ENCODE measurements at regions of chr5 and their contacts with region 1.

Region 1: GRCh38 chr5:10601246-10602030 is 37.6 kb downstream of the ANKRD33B start:
- DNase-seq: peak; percentile 99
- H3K4me3 Mint-ChIP-seq: peak overlapping the region; percentile 72
- H3K27ac Mint-ChIP-seq: peak overlapping the region; percentile 96
- H3K4me1 Mint-ChIP-seq: peaks cover 33% of the 10 kb centered on the region
- H3K27me3 Mint-ChIP-seq: no peaks in the 10 kb centered on the region
- CTCF ChIP-seq: no peak

Region 2: GRCh38 chr5:10552183-10553143 is 49.0 kb before region 1 on chr5:
- CTCF ChIA-PET with region 1: interaction called, 4 read pairs
- POLR2A ChIA-PET with region 1: interaction called, 10 read pairs
- intact Hi-C with region 1: no loop called
- DNase-seq: peak; percentile 79
- H3K4me3 Mint-ChIP-seq: no peak overlapping the region
- H3K27ac Mint-ChIP-seq: peak overlapping the region; percentile 87
- H3K4me1 Mint-ChIP-seq: peaks cover 65% of the 10 kb centered on the region
- H3K27me3 Mint-ChIP-seq: no peaks in the 10 kb centered on the region
- CTCF ChIP-seq: no peak

Region 3: DNA sequence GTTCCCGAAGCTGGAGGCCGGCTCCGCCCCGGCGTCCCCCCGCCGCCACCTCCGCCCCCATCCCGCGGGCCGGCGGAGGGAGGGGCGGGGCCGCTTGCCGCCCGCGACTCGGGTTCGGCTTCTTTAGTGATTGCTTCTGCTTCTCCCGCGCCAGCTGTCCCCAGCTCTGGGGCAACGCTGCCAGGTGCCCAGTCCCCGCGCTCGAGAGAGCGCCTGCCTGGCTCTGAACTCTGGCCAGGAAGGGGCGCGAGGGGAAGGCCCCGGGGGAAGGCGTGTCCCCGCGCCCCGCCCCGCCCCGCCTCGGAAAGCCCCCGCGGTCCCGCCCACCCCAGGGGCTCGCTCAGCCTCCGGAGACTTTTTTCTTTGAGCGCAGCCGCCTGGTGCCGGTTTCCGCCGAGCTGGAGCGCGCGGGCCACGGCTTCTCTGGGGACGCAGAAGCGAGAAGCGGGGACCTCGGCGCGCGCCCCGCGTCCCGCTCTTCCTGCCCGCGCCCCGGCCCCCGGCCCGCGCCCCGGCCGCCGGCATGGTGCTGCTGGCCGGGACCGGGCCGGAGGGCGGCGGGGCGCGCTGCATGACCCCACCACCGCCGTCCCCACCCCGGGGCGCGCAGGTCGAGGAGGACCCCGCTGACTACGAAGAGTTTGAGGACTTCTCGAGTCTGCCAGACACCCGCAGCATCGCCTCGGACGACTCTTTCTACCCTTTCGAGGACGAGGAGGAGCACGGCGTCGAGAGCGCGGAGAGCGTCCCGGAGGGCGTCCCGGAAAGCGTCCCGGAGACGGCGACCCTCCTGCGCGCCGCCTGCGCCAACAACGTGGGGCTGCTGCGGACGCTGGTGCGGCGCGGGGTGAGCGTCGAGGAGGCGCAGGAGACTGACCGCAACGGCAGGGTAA is 37.2 kb before region 1 on chr5 and contains the start of gene ANKRD33B:
- CTCF ChIA-PET with region 1: no interaction called
- POLR2A ChIA-PET with region 1: interaction called, 5 read pairs
- intact Hi-C with region 1: loop called (anchors 2 kb)
- DNase-seq: peak; percentile 55
- H3K4me3 Mint-ChIP-seq: peak within 1 kb of the TSS; percentile 66
- H3K27ac Mint-ChIP-seq: no peak within 1 kb of the TSS
- H3K4me1 Mint-ChIP-seq: peaks cover 13% of the 10 kb centered on the region
- H3K27me3 Mint-ChIP-seq: no peaks in the 10 kb centered on the region
- CTCF ChIP-seq: no peak
- total RNA-seq, gene ANKRD33B: 3.1 TPM in 2 replicates

Measured in MCF 10A (cell line).